Activated CD8-positive, alpha-beta T cell treated with anti-CD3 and anti-CD28 coated beads, Interleukin-2, amount 10 ng/mL, durations not matched to agents 7 days and 5 days (primary cell): ENCODE measurements at regions of chr18 and their contacts with region 1.

Region 1: GRCh38 chr18:13500869-13501542 is 225.4 kb downstream of the FAM210A start:
- DNase-seq: no peak
- ATAC-seq: no peak
- H3K4me3 Mint-ChIP-seq: no peak overlapping the region
- H3K27ac Mint-ChIP-seq: no peak overlapping the region
- H3K4me1 Mint-ChIP-seq: peaks cover 40% of the 10 kb centered on the region
- H3K27me3 Mint-ChIP-seq: no peaks in the 10 kb centered on the region

Region 2: DNA sequence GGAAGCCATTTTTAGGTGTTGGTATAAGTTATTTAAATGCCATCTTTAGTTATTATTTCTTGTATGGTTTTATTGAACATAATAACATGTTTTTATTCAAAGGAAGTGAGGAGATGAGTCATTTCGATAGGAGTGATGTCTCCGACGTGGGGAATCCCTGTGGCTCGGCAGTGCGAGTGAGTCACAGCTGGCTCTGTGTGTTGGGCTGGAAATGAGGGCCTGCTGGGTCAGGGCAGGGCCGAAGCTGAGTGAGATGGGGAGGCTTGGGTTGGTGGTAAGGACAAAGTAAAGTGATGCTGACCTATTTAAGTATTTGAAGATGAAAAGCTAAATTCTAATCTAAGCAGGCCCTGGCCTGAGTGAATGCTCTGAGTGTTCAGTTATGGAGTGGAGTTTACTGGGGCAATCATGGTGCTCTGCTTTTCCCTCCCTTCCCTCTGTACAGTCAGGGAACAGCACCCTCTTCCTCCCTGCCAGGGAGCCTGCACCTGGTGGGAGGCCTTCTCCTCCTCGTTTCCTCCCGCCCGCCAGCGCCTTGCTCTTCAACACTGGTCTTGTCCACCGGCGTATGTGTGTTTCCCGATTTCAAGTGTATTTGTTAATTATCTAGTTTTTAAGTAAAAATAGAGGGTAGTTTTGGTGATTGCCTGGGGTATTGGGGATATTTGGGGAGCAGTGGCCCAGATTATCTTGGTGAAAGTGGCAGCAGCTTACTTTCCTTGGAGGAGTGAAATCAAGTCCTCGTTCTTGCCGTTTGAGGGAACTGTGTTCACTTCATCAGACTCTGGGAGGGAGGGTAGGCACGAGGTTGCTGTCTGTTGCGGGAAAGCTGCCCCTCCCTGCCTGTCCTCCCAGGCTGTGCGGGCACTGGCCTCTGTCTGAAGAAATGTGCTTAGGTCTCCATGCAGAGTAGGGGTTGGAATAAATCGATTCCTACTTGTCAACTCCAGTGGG is 125.4 kb before region 1 on chr18:
- CTCF ChIA-PET with region 1: no interaction called
- POLR2A ChIA-PET with region 1: no interaction called
- DNase-seq: peak; percentile 83
- ATAC-seq: peak; percentile 76
- H3K4me3 Mint-ChIP-seq: peak overlapping the region; percentile 40
- H3K27ac Mint-ChIP-seq: peak overlapping the region; percentile 82
- H3K4me1 Mint-ChIP-seq: peaks cover 77% of the 10 kb centered on the region
- H3K27me3 Mint-ChIP-seq: no peaks in the 10 kb centered on the region

Region 3: DNA sequence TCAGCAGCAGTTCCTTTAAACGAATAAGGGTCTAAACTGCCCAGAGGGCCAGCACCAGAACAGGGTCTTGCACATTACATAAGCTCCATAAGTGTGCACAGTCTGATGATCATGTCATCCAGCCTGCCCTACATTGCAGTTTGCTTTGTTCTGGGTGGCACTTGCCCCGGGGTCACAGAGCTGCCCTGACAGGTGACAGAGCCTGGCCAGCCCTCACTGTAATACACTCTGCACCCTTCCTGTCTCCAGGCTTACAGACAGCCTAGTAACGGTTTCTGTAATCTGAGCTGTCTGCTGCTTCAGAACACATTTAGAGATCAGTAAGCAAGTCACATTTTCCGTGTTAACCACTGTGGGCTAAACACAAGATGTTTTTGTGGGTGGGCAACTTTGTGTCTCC is 12.0 kb after region 1 on chr18:
- CTCF ChIA-PET with region 1: interaction called, 10 read pairs
- POLR2A ChIA-PET with region 1: no interaction called
- DNase-seq: peak; percentile 24
- ATAC-seq: peak; percentile 87
- H3K4me3 Mint-ChIP-seq: no peak overlapping the region
- H3K27ac Mint-ChIP-seq: no peak overlapping the region
- H3K4me1 Mint-ChIP-seq: peaks cover 25% of the 10 kb centered on the region
- H3K27me3 Mint-ChIP-seq: no peaks in the 10 kb centered on the region